Activated CD8-positive, alpha-beta T cell treated with anti-CD3 and anti-CD28 coated beads for 36 hours (primary cell): ENCODE measurements at regions of chr20 and their contacts with region 1.

Region 1: GRCh38 chr20:50070991-50071888 is 41.7 kb downstream of the UBE2V1 start:
- DNase-seq: peak; percentile 93
- ATAC-seq: peak; percentile 99
- H3K4me3 Mint-ChIP-seq: peak overlapping the region; percentile 61
- H3K27ac Mint-ChIP-seq: no peak overlapping the region
- H3K4me1 Mint-ChIP-seq: no peaks in the 10 kb centered on the region
- H3K27me3 Mint-ChIP-seq: no peaks in the 10 kb centered on the region
- CTCF ChIP-seq: peak; percentile 100

Region 2: GRCh38 chr20:49936153-49937027 is 134.8 kb before region 1 on chr20 and contains the start of gene RNF114:
- CTCF ChIA-PET with region 1: interaction called, 13 read pairs
- POLR2A ChIA-PET with region 1: no interaction called
- intact Hi-C with region 1: no loop called
- DNase-seq: peak; percentile 92
- ATAC-seq: peak; percentile 96
- H3K4me3 Mint-ChIP-seq: peak within 1 kb of the TSS; percentile 90
- H3K27ac Mint-ChIP-seq: peak within 1 kb of the TSS; percentile 91
- H3K4me1 Mint-ChIP-seq: peaks cover 36% of the 10 kb centered on the region
- H3K27me3 Mint-ChIP-seq: no peaks in the 10 kb centered on the region
- CTCF ChIP-seq: no peak
- total RNA-seq, gene RNF114: 68.4 to 70.5 TPM

Region 3: DNA sequence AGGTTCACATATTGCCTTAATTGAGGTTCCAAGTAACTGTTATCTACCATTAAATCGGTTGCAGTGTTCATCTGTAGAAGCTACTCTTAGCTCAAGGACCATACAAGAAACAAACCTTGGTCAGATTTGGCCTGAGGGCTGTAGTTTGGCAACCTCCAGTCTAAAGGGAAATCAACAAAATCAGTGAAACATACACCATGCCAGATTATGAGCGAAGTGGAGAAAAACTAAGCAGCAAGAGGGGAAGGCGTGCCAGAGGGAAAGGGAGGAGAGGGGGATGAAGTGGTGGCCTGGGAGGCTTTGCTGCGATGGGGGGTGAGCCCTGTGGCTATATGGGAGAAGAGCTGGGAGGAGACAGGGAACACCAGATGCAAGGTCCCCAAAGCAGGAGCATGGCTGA is 97.2 kb before region 1 on chr20:
- CTCF ChIA-PET with region 1: interaction called, 364 read pairs
- POLR2A ChIA-PET with region 1: interaction called, 14 read pairs
- intact Hi-C with region 1: loop called (anchors 2 kb)
- DNase-seq: no peak
- ATAC-seq: no peak
- H3K4me3 Mint-ChIP-seq: no peak overlapping the region
- H3K27ac Mint-ChIP-seq: no peak overlapping the region
- H3K4me1 Mint-ChIP-seq: peaks cover 4% of the 10 kb centered on the region
- H3K27me3 Mint-ChIP-seq: no peaks in the 10 kb centered on the region
- CTCF ChIP-seq: no peak

Region 4: DNA sequence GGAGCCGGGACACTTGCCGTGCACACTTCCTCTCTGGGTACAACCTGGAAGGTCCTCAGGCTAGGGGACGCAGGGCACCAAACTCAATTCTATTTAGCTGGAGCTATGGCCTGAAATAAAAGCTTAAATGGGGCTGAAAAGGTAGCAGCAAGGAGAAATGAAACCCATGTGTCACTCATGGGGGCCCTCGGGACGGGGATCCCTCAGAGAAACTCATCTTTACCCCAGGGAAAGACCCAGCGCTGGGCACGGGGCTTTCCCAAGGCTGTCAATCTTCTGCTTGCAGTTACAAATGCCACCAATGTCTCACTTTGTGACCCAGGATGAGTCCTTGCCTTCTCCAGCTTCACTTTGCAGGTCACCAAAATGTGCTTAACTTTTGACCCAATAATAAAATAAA is 71.9 kb before region 1 on chr20:
- CTCF ChIA-PET with region 1: interaction called, 16 read pairs
- POLR2A ChIA-PET with region 1: no interaction called
- intact Hi-C with region 1: no loop called
- DNase-seq: peak; percentile 86
- ATAC-seq: peak; percentile 83
- H3K4me3 Mint-ChIP-seq: no peak overlapping the region
- H3K27ac Mint-ChIP-seq: no peak overlapping the region
- H3K4me1 Mint-ChIP-seq: peaks cover 22% of the 10 kb centered on the region
- H3K27me3 Mint-ChIP-seq: peaks cover 3% of the 10 kb centered on the region
- CTCF ChIP-seq: no peak

Region 5: DNA sequence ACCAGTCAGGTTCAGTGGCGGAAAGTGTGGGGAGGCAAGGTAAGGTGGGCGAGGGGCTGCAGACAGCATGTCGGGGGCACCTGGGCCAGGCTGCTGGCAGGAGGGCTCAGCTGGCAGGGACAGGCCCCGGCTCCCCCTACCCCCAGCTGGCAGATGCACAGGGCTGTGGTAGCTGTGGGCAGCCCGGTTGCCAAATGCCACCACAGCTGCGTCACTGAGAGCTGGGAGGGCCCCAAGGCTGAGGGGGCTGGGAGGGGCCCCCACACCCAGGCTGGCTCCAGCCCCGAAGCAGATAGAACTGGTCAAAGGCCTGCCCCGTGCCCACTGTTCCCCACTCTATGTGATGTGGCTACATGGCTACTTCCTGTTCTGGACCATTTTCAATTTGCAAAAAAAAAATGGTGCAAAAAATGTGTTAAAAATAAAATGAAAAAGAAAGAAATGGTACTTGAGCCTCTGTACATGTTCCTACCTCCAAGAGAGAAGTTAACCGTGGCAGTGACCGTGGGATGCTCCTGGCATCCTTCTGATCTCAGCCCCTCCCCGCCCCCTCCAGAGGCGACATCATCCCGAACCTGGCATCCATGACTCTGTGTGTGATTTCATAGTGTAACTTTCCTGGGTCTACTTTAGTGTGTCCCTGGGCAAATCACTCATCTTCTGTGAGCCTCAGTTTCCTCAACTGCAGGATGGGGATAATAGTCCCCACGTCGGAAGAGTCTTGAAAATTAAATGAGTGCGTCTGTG is 22.6 kb before region 1 on chr20:
- CTCF ChIA-PET with region 1: interaction called, 29 read pairs
- POLR2A ChIA-PET with region 1: interaction called, 4 read pairs
- intact Hi-C with region 1: no loop called
- DNase-seq: peak; percentile 61
- ATAC-seq: peak; percentile 86
- H3K4me3 Mint-ChIP-seq: no peak overlapping the region
- H3K27ac Mint-ChIP-seq: peak overlapping the region; percentile 4
- H3K4me1 Mint-ChIP-seq: peaks cover 16% of the 10 kb centered on the region
- H3K27me3 Mint-ChIP-seq: peaks cover 9% of the 10 kb centered on the region
- CTCF ChIP-seq: no peak

Region 6: GRCh38 chr20:50101281-50101680 is 30.0 kb after region 1 on chr20:
- CTCF ChIA-PET with region 1: interaction called, 32 read pairs
- POLR2A ChIA-PET with region 1: interaction called, 3 read pairs
- intact Hi-C with region 1: no loop called
- DNase-seq: no peak
- ATAC-seq: no peak
- H3K4me3 Mint-ChIP-seq: no peak overlapping the region
- H3K27ac Mint-ChIP-seq: no peak overlapping the region
- H3K4me1 Mint-ChIP-seq: peaks cover 50% of the 10 kb centered on the region
- H3K27me3 Mint-ChIP-seq: no peaks in the 10 kb centered on the region
- CTCF ChIP-seq: no peak

Region 7: DNA sequence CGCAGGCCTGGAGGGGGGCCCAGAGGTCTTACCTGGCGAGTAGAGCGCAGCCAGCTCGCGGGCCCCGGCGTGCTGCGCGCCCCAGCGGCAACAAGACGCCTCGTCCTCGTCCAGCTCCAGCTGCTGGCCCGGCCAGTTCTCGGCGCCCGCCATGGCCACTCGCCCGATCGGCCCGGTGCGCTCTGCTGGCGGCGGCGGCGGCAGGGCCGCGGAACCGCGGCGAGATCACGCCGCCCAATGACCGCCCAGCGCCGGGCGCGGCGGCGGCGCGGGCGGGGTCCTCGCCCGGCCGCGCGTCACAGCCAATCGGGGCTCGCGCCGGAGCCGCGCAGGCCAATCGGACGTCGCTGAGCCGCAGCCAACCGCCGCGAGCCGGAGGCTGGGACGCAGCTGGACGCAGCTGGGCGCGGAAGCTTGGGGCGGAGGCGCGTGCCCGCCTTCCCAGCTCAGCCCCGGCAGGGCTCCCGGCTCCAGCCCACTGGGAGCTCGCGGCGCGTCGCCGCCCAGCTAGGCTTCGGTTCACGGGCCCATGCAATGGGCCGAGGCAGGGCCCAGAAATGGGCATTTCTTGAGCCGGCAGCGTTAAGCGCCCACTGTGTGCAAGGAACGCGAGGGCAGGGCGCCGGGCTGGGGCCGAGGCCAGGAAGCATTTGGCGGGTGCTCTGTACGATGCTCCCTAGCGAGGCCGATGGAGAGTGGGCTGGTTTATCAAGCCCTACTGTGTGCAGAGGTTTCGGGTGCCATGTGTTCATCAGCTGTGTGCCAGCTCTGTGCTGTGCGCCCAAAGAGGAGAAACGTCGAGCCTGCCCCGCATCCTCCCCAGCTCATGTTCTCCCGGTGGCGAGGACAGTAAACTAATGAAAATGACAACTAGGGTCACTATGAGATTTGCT is 82.5 kb after region 1 on chr20 and contains the start of gene PEDS1:
- CTCF ChIA-PET with region 1: interaction called, 13 read pairs
- POLR2A ChIA-PET with region 1: interaction called, 5 read pairs
- intact Hi-C with region 1: no loop called
- DNase-seq: peak; percentile 84
- ATAC-seq: peak; percentile 96
- H3K4me3 Mint-ChIP-seq: peak within 1 kb of the TSS; percentile 85
- H3K27ac Mint-ChIP-seq: peak within 1 kb of the TSS; percentile 84
- H3K4me1 Mint-ChIP-seq: peaks cover 35% of the 10 kb centered on the region
- H3K27me3 Mint-ChIP-seq: no peaks in the 10 kb centered on the region
- CTCF ChIP-seq: no peak
- total RNA-seq, gene PEDS1: 16.0 to 17.3 TPM

Region 8: DNA sequence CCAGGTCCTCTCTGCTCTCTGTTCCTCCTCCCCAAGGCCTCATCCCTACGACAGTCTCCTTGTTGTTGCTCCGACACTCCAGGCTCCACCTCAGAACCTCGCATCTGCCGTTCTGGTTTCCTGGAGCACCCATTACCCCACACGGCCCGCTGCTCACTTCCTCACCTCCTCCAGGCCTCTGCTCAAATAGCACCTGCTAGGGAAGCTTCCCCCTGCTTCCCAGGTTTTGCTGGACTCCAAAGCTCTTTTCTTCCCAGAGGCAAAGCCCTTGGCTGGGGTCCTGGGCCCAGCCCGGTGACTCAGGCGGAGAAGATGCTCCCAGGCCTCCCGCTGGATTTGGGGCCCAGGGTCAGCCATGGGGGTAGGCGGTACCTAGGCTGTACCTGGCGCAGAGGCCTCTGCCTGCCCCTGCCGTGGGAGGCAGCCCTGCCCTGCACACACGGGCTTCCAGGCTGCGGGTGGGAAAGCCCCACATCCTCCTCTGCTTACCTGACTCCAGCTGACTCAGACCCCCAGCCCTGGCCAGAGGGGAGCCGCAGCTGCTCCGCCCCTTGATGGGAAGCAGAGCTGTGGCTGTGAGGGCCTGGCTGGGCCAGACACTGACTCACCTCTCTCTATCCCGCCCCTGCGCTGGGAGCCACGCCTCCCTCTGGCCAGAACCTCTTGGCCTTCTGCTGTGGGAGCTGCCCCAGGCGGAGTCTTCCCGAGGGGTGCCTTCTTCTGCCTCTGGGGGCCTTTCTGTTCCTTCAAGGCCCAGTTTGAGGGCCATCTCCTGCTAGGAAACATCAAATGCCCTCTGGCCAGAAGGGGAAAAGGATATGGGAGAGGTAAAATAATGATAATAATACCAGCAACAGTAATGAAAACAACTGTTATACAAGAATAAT is 249.9 kb after region 1 on chr20:
- CTCF ChIA-PET with region 1: no interaction called
- POLR2A ChIA-PET with region 1: no interaction called
- intact Hi-C with region 1: no loop called
- DNase-seq: peak; percentile 62
- ATAC-seq: peak; percentile 93
- H3K4me3 Mint-ChIP-seq: no peak overlapping the region
- H3K27ac Mint-ChIP-seq: no peak overlapping the region
- H3K4me1 Mint-ChIP-seq: peaks cover 11% of the 10 kb centered on the region
- H3K27me3 Mint-ChIP-seq: peaks cover 20% of the 10 kb centered on the region
- CTCF ChIP-seq: no peak